ENCODE measurements at regions of chr17 and their contacts with region 1.

Region 1: DNA sequence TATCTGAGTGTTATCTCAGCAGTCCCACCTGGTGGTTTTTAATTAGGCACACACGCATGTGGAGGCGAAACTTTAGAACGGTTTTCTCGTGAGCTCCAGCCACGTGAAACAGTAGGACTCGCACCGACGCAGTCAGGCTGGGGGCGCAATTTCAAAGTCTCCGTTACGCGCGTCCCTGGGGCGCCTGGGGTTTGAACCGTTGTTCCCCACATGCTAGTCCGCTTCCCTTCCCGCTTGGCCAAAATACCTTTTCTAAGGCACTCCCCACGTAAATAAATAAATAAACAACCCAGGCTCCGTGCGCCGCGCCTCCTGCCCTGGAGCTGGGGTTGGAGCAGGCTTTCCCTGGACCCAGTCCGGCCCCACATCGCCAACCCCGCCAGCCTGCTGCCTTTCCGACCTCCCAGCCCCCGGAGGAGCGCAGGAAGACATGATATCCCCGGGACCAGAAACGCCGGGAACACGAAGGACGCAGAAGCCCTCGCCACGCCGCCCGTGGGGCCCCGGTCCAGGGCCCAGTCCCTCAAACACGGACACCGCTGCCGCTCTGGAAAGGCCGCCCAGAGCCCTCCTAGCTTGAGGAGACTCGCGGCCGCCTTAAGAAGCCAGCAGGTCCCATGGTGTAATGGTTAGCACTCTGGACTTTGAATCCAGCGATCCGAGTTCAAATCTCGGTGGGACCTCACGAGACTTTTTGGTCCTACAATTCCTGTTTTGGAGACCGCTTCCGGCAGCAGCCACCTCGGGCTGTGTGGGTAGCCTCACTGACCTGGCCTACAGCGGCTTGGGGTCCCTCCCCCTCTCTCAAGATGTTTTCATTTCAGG is 18.2 kb downstream of the GNGT2 start:
- DNase-seq: peak; percentile 92 to 97
- H3K4me3 ChIP-seq: peak overlapping the region; percentile 64 to 84 (median 71)
- H3K27ac ChIP-seq: peak overlapping the region; percentile 93 to 94
- H3K4me1 ChIP-seq: no peaks in the 10 kb centered on the region
- H3K27me3 ChIP-seq: no peaks in the 10 kb centered on the region
- CTCF ChIP-seq: peak in 1 of 3 donors; percentile 22
- POLR2A ChIP-seq: no peak

Region 2: GRCh38 chr17:49414622-49415350 is 222.7 kb after region 1 on chr17 and contains the start of gene PHB1:
- intact Hi-C with region 1: loop called (anchors 5 kb)
- DNase-seq: peak; percentile 92 to 95
- H3K4me3 ChIP-seq: peak within 1 kb of the TSS; percentile 67 to 93 (median 86)
- H3K27ac ChIP-seq: peak within 1 kb of the TSS; percentile 39 to 60
- H3K4me1 ChIP-seq: peaks cover 0 to 6% of the 10 kb centered on the region in 2 donors
- H3K27me3 ChIP-seq: no peaks in the 10 kb centered on the region
- CTCF ChIP-seq: no peak
- POLR2A ChIP-seq: no peak
- total RNA-seq, gene PHB1: 100 to 110 (median 108) TPM

Measured in breast epithelium (tissue), 4 donors.